ENCODE measurements at regions of chr9 and their contacts with region 1.

Region 1: GRCh38 chr9:121350993-121351561 is 19.0 kb downstream of the STOM start:
- DNase-seq: no peak
- H3K4me3 Mint-ChIP-seq: no peak overlapping the region
- H3K27ac Mint-ChIP-seq: no peak overlapping the region
- H3K4me1 Mint-ChIP-seq: peaks cover 40% of the 10 kb centered on the region
- H3K27me3 Mint-ChIP-seq: no peaks in the 10 kb centered on the region

Region 2: GRCh38 chr9:121362813-121363621 is 11.9 kb after region 1 on chr9:
- CTCF ChIA-PET with region 1: interaction called, 16 read pairs
- POLR2A ChIA-PET with region 1: interaction called, 30 read pairs
- DNase-seq: no peak
- H3K4me3 Mint-ChIP-seq: no peak overlapping the region
- H3K27ac Mint-ChIP-seq: no peak overlapping the region
- H3K4me1 Mint-ChIP-seq: peaks cover 83% of the 10 kb centered on the region
- H3K27me3 Mint-ChIP-seq: no peaks in the 10 kb centered on the region

Region 3: DNA sequence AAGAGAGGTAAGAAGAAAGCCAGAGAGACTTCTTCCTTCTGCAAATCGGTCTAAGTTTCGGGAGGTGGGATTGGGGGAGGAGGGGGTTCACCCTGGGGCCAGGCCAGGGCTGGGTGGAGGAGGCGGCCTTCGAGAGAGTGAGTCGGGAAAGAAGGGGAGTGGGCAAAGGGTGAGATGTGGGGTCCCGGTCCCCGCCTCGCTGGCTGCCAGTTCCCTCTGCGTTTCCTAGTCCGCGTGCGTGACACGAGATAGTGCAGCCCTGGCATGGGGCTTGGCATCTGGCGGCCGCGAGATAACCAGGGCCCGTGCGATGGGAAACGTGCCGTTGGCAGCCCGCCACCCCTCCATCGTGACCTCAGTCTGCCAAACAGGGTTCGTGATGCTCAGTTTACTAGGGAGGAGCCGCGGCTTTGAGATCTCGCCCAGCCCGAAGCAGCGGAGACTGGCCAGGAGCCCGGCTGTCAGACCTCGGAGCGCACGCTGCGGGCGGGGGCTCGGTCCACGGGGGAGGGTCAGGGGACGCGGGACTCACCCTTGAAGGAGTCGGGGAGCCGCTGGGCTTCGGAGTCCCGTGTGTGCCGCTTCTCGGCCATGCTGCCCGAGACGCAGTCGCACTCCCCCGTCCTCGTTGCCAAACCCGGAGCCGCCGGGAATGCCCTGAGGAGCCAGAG is 18.7 kb after region 1 on chr9 and contains the start of gene STOM:
- CTCF ChIA-PET with region 1: interaction called, 16 read pairs
- POLR2A ChIA-PET with region 1: interaction called, 30 read pairs
- DNase-seq: peak; percentile 74
- H3K4me3 Mint-ChIP-seq: peak within 1 kb of the TSS; percentile 90
- H3K27ac Mint-ChIP-seq: peak within 1 kb of the TSS; percentile 89
- H3K4me1 Mint-ChIP-seq: peaks cover 64% of the 10 kb centered on the region
- H3K27me3 Mint-ChIP-seq: no peaks in the 10 kb centered on the region
- total RNA-seq, gene STOM: 101 to 104 TPM

Measured in activated CD4-positive, alpha-beta memory T cell treated with anti-CD3 and anti-CD28 coated beads, Interleukin-2, amount 10 ng/mL, durations not matched to agents 7 days and 5 days (primary cell).